CD4-positive, alpha-beta T cell (primary cell): ENCODE measurements at regions of chr9 and their contacts with region 1.

Region 1: DNA sequence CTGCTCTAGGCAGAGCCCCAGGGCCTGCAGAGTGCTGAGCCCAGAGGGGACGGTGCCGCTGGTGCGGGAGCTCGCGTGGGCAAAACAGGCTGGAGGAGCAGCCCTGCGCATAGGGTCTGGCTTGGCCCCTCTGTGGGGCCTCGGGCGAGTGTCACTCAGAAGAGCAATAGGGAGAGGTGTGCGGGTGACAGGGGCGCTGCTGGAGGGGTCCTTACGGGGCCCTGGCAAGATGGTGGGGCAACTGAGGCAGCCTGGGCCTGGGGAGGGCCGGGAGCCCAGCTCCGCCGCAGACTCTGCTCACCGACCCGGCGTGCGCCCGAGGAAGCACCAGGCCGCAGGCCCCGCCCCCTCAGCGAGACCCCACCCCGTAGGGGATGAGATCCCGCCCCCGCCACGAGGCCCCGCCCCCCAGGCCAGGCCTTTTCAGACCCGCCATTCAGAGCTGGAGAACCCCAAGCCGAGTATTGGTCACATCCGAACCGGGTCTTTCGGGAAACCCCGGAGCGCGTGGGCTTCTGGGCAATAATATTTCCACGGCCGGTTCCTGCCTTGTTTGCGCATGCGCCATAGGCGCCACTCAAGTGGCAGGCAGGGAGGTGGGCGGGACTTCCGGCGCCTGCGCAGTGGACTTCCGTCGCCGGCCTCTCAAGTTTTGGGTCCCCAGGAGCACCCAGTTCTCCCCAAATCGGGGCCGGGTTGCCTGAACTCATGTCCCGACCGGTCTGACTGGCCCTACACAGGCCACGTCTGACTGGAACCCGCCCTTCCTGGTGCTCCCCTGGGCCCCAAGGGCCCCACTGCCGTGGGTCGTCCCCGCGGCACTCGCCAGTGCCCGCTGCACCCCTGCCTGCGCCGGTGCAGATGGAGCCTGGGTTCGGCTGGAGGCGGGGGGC is 1.3 kb upstream of the RNF208 start:
- DNase-seq: peak; percentile 94 to 100 (median 98)
- ATAC-seq: peak; percentile 94
- H3K4me3 ChIP-seq: peak overlapping the region; percentile 74
- H3K4me3 Mint-ChIP-seq: peak overlapping the region; percentile 87
- H3K27ac ChIP-seq: peak overlapping the region; percentile 74 to 80
- H3K27ac Mint-ChIP-seq: peak overlapping the region; percentile 81
- H3K4me1 ChIP-seq: peaks cover 36% of the 10 kb centered on the region
- H3K4me1 Mint-ChIP-seq: peaks cover 18% of the 10 kb centered on the region
- H3K27me3 ChIP-seq: peaks cover 0 to 3% of the 10 kb centered on the region in 2 experiments
- H3K27me3 Mint-ChIP-seq: peaks cover 5% of the 10 kb centered on the region
- CTCF ChIP-seq: no peak

Region 2: DNA sequence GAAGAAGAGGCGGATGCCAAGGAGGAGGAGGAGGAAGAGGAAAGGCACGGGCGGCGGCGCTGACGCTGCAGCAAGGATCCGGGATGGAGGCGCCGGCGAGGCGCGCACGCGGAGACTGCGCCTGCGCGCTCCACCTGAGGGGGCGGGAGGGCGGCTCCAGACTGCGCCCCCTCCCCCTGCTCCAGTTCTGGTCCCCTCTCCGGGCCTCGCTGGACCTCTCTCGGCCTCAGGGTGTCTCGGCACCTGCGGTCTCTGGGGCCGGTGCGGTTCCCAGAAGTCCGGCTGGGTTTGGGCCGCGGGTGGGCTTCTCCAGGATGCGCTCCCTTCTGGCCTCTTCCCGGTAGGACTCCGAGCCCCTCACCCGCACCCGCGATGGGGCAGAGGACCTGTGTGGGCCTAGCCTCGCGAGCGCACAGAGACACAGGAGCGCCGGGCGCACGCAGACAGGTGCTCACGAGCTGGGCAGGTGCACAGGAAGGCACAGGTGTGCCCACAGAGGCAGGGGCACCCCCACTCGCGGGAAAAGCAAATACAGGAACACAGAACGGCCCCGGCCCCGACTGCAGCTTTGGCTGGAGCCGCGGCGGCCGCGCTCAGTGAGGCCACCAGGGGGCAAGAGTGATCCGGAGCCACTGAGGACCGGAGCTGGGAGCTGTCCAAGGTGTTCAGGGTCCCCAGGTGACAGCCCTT is 177.1 kb before region 1 on chr9 and contains the start of gene NPDC1:
- CTCF ChIA-PET with region 1: interaction called, 4 read pairs
- POLR2A ChIA-PET with region 1: no interaction called
- intact Hi-C with region 1: loop called (anchors 1 to 5 kb)
- DNase-seq: peak; percentile 67 to 90 (median 75)
- ATAC-seq: peak; percentile 87
- H3K4me3 ChIP-seq: peak within 1 kb of the TSS; percentile 55
- H3K4me3 Mint-ChIP-seq: peak within 1 kb of the TSS; percentile 51
- H3K27ac ChIP-seq: no peak within 1 kb of the TSS
- H3K27ac Mint-ChIP-seq: no peak within 1 kb of the TSS
- H3K4me1 ChIP-seq: peaks cover 44% of the 10 kb centered on the region
- H3K4me1 Mint-ChIP-seq: no peaks in the 10 kb centered on the region
- H3K27me3 ChIP-seq: peaks cover 68 to 69% of the 10 kb centered on the region in 2 experiments
- H3K27me3 Mint-ChIP-seq: peaks cover 44% of the 10 kb centered on the region
- CTCF ChIP-seq: peak; percentile 77
- total RNA-seq, gene NPDC1: 15.3 to 16.0 TPM

Region 3: DNA sequence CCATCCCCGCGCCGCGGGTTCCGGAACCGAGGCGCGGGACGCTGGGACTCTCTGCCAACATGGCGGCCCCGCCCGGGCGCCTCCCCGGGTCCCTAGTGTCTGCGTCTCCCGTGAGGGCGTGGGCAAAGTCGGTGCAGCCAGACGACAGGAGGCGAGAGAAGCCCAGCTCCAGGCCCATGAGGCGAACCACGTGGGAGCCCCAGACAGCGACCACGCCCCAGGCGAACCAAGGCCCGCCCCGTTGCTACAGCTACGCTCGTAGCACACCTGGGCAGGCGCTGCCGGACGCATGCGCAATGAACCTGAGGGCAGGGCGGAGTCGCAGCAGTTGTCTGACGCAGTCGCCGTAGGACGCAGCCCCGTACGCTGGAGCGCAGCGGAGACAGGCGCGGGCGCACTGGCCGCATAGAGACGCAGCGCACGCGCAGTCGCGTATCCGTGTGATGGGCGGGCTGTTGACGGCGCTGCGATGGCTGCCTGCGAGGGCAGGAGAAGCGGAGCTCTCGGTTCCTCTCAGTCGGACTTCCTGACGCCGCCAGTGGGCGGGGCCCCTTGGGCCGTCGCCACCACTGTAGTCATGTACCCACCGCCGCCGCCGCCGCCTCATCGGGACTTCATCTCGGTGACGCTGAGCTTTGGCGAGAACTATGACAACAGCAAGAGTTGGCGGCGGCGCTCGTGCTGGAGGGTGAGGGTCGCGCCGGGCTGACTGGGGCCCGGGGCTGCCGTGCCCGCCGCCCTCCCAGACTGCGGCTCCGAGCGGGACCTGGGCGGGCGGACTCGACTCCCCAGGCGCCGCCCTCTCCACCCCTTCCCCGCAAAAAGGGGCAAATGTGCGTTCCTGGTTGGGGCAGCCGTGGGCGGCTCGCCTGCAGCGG is 136.6 kb before region 1 on chr9 and contains the start of gene MAN1B1:
- CTCF ChIA-PET with region 1: no interaction called
- POLR2A ChIA-PET with region 1: interaction called, 24 read pairs
- intact Hi-C with region 1: no loop called
- DNase-seq: peak; percentile 98 to 100 (median 100)
- ATAC-seq: peak; percentile 79
- H3K4me3 ChIP-seq: peak within 1 kb of the TSS; percentile 71
- H3K4me3 Mint-ChIP-seq: peak within 1 kb of the TSS; percentile 93
- H3K27ac ChIP-seq: peak within 1 kb of the TSS; percentile 79 to 90
- H3K27ac Mint-ChIP-seq: peak within 1 kb of the TSS; percentile 89
- H3K4me1 ChIP-seq: peaks cover 22% of the 10 kb centered on the region
- H3K4me1 Mint-ChIP-seq: peaks cover 32% of the 10 kb centered on the region
- H3K27me3 ChIP-seq: no peaks in the 10 kb centered on the region
- H3K27me3 Mint-ChIP-seq: no peaks in the 10 kb centered on the region
- CTCF ChIP-seq: no peak
- total RNA-seq, gene MAN1B1: 60.9 to 66.9 TPM

Region 4: GRCh38 chr9:137095664-137096517 is 127.4 kb before region 1 on chr9:
- CTCF ChIA-PET with region 1: interaction called, 4 read pairs
- POLR2A ChIA-PET with region 1: interaction called, 24 read pairs
- intact Hi-C with region 1: loop called (anchors 1 kb)
- DNase-seq: peak; percentile 78 to 95 (median 85)
- ATAC-seq: peak; percentile 98
- H3K4me3 ChIP-seq: peak overlapping the region; percentile 42
- H3K4me3 Mint-ChIP-seq: peak overlapping the region; percentile 86
- H3K27ac ChIP-seq: peak overlapping the region; percentile 59 to 85
- H3K27ac Mint-ChIP-seq: peak overlapping the region; percentile 92
- H3K4me1 ChIP-seq: peaks cover 28% of the 10 kb centered on the region
- H3K4me1 Mint-ChIP-seq: peaks cover 22% of the 10 kb centered on the region
- H3K27me3 ChIP-seq: no peaks in the 10 kb centered on the region
- H3K27me3 Mint-ChIP-seq: no peaks in the 10 kb centered on the region
- CTCF ChIP-seq: peak; percentile 80

Region 5: GRCh38 chr9:137114610-137115391 is 108.5 kb before region 1 on chr9 and contains the start of gene DPP7:
- CTCF ChIA-PET with region 1: interaction called, 3 read pairs
- POLR2A ChIA-PET with region 1: interaction called, 6 read pairs
- intact Hi-C with region 1: loop called in 1 of 2 experiments (anchors 1 kb)
- DNase-seq: peak; percentile 58 to 92 (median 76)
- ATAC-seq: peak; percentile 94
- H3K4me3 ChIP-seq: peak within 1 kb of the TSS; percentile 54
- H3K4me3 Mint-ChIP-seq: peak within 1 kb of the TSS; percentile 79
- H3K27ac ChIP-seq: peak within 1 kb of the TSS in 1 of 2 donors; percentile 46
- H3K27ac Mint-ChIP-seq: peak within 1 kb of the TSS; percentile 44
- H3K4me1 ChIP-seq: peaks cover 28% of the 10 kb centered on the region
- H3K4me1 Mint-ChIP-seq: no peaks in the 10 kb centered on the region
- H3K27me3 ChIP-seq: no peaks in the 10 kb centered on the region
- H3K27me3 Mint-ChIP-seq: no peaks in the 10 kb centered on the region
- CTCF ChIP-seq: no peak
- total RNA-seq, gene DPP7: 344 to 349 TPM

Region 6: DNA sequence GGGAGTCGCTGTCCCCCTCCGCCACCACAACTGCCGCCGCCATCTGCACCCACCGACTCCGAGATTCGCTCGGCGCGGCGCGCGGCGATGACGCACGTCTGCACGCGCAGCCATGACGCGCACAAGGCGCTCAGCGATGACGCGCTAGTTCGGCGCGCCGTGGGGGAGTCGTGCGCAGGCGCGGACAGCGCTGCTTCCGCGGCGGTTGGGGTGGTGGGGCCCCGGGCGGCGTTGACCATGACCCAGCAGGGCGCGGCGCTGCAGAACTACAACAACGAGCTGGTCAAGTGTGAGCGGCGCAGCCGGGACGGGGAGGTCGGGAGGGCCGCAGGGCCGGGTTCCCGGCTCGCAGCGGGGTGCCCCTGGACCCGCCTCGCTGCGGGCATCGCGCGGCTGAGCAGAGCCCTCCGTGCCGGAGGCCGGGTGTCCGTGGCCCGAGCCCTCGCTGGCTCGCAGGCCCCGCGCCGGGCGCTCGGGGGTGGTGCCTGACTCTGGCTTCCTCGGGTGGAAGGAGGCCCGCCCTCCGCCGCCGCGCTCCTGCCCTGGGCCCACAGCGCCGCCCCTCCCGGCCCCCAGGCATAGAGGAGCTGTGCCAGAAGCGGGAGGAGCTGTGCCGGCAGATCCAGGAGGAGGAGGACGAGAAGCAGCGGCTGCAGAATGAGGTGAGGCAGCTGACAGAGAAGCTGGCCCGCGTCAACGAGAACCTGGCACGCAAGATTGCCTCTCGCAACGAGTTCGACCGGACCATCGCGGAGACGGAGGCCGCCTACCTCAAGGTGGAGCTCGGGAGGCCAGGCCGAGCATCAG is 34.6 kb before region 1 on chr9 and contains the starts of genes ANAPC2 and SSNA1:
- CTCF ChIA-PET with region 1: interaction called, 14 read pairs
- POLR2A ChIA-PET with region 1: interaction called, 22 read pairs
- intact Hi-C with region 1: loop called (anchors 1 to 2 kb)
- DNase-seq: peak; percentile 83 to 98 (median 90)
- ATAC-seq: peak; percentile 79
- H3K4me3 ChIP-seq: peak within 1 kb of the TSS; percentile 100
- H3K4me3 Mint-ChIP-seq: peak within 1 kb of the TSS; percentile 94
- H3K27ac ChIP-seq: peak within 1 kb of the TSS; percentile 86 to 92
- H3K27ac Mint-ChIP-seq: peak within 1 kb of the TSS; percentile 79
- H3K4me1 ChIP-seq: peaks cover 50% of the 10 kb centered on the region
- H3K4me1 Mint-ChIP-seq: peaks cover 29% of the 10 kb centered on the region
- H3K27me3 ChIP-seq: no peaks in the 10 kb centered on the region
- H3K27me3 Mint-ChIP-seq: no peaks in the 10 kb centered on the region
- CTCF ChIP-seq: peak; percentile 48
- total RNA-seq, gene ANAPC2: 144 to 149 TPM
- total RNA-seq, gene SSNA1: 30.1 to 30.5 TPM

Region 7: GRCh38 chr9:137200311-137201204 is 22.8 kb before region 1 on chr9 and contains the start of gene TPRN:
- CTCF ChIA-PET with region 1: interaction called, 3 read pairs
- POLR2A ChIA-PET with region 1: interaction called, 38 read pairs
- intact Hi-C with region 1: loop called (anchors 1 kb)
- DNase-seq: peak; percentile 93 to 99 (median 98)
- ATAC-seq: peak; percentile 94
- H3K4me3 ChIP-seq: peak within 1 kb of the TSS; percentile 87
- H3K4me3 Mint-ChIP-seq: peak within 1 kb of the TSS; percentile 93
- H3K27ac ChIP-seq: peak within 1 kb of the TSS; percentile 72 to 76
- H3K27ac Mint-ChIP-seq: peak within 1 kb of the TSS; percentile 84
- H3K4me1 ChIP-seq: peaks cover 48% of the 10 kb centered on the region
- H3K4me1 Mint-ChIP-seq: peaks cover 23% of the 10 kb centered on the region
- H3K27me3 ChIP-seq: no peaks in the 10 kb centered on the region
- H3K27me3 Mint-ChIP-seq: no peaks in the 10 kb centered on the region
- CTCF ChIP-seq: no peak
- total RNA-seq, gene TPRN: 6.1 to 8.6 TPM